Head of caudate nucleus (tissue), 42 donors: ENCODE measurements at regions of chr6 and their contacts with region 1.

Region 1: GRCh38 chr6:134063966-134064445 is 11.6 kb upstream of the SLC2A12 start:
- DNase-seq: peak; percentile 34 to 93 (median 80)

Region 2: GRCh38 chr6:133923938-133924593 is 139.9 kb before region 1 on chr6:
- intact Hi-C with region 1: loop called (anchors 10 kb)
- DNase-seq: peak in 41 of 42 donors; percentile 29 to 90 (median 75)

Region 3: GRCh38 chr6:133973109-133973971 is 90.7 kb before region 1 on chr6:
- intact Hi-C with region 1: loop called (anchors 5 kb)
- DNase-seq: peak in 4 of 42 donors; percentile 14 to 66 (median 39)

Region 4: DNA sequence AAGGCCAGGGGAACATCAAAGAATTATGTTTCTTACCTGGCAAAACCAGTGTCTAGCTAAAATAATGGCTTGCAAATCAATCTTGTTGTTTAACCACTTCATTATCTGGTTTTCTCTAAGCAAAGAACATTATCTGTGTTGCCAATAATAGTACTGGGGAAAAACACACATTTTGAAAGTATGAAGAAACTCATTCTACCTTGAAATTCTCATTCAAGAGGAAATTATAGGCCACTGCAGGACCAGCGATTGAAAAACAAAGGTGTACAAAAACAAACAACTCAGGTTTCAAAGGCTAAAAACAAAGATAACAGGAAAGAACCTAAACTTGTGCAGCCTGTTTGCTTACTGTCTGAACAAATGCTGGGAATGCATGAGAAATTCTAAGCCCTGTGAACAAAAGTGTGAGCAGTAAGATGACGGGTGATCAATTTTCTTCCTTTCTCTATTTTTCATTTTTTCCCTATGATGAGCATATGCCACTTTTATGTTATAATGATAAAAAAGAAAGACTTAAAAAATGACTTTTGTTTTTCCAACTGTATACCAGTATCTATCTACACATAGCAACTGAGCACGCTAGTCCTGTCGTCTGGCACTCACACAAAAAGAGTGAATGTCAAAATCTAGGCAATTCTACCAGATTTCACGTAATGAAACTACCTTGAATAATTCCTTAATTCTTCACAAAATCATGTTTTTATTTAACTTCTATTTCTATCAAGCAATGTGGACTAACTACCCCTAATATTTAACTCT is 136.0 kb after region 1 on chr6:
- intact Hi-C with region 1: no loop called
- DNase-seq: no peak